ENCODE measurements at regions of chr6 and their contacts with region 1.

Region 1: GRCh38 chr6:89122625-89123024 is 4.8 kb upstream of the SRSF12 start:
- DNase-seq: no peak
- H3K4me3 Mint-ChIP-seq: no peak overlapping the region
- H3K27ac Mint-ChIP-seq: no peak overlapping the region
- H3K4me1 Mint-ChIP-seq: no peaks in the 10 kb centered on the region
- H3K27me3 Mint-ChIP-seq: peaks cover 29% of the 10 kb centered on the region

Region 2: DNA sequence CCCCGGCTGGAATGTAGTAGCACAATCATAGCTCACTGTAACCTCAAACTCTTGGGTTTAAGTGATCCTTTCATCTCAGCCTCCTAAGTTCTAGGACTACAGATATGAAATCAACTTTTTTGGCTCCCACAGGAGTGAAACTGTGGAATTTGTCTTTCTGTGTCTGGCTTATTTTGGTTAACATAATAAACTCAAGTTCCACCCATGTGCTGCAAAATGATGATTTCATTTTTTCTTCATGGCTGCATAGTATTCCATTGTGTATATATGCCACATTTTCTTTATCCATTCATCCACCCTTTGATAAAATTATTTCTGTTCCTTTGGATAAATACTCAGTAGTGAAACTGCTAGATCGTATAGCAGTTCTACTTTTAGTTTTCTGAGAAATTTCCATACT is 189.1 kb before region 1 on chr6:
- intact Hi-C with region 1: no loop called
- DNase-seq: no peak
- H3K4me3 Mint-ChIP-seq: no peak overlapping the region
- H3K27ac Mint-ChIP-seq: no peak overlapping the region
- H3K4me1 Mint-ChIP-seq: no peaks in the 10 kb centered on the region
- H3K27me3 Mint-ChIP-seq: no peaks in the 10 kb centered on the region

Region 3: GRCh38 chr6:89242574-89243330 is 120.1 kb after region 1 on chr6:
- intact Hi-C with region 1: loop called (anchors 1 kb)
- DNase-seq: no peak
- H3K4me3 Mint-ChIP-seq: no peak overlapping the region
- H3K27ac Mint-ChIP-seq: no peak overlapping the region
- H3K4me1 Mint-ChIP-seq: peaks cover 16% of the 10 kb centered on the region
- H3K27me3 Mint-ChIP-seq: peaks cover 17% of the 10 kb centered on the region